CD4-positive, alpha-beta memory T cell (primary cell): ENCODE measurements at regions of chr1 and their contacts with region 1.

Region 1: GRCh38 chr1:181105134-181106021 is 16.9 kb downstream of the IER5 start:
- DNase-seq: peak; percentile 90 to 94 (median 91)
- H3K4me3 ChIP-seq: peak overlapping the region in 1 of 2 donors; percentile 76
- H3K4me3 Mint-ChIP-seq: peak overlapping the region; percentile 87 to 97 (median 90)
- H3K27ac ChIP-seq: peak overlapping the region; percentile 79
- H3K27ac Mint-ChIP-seq: peak overlapping the region; percentile 92 to 98 (median 96)
- H3K4me1 ChIP-seq: peaks cover 56% of the 10 kb centered on the region
- H3K4me1 Mint-ChIP-seq: peaks cover 33 to 71% (median 50%) of the 10 kb centered on the region in 4 donors
- H3K27me3 ChIP-seq: no peaks in the 10 kb centered on the region
- H3K27me3 Mint-ChIP-seq: no peaks in the 10 kb centered on the region

Region 2: GRCh38 chr1:181152892-181153633 is 47.7 kb after region 1 on chr1:
- CTCF ChIA-PET with region 1: no interaction called
- POLR2A ChIA-PET with region 1: interaction called, 19 read pairs
- intact Hi-C with region 1: no loop called
- DNase-seq: no peak
- H3K4me3 ChIP-seq: no peak overlapping the region
- H3K4me3 Mint-ChIP-seq: no peak overlapping the region
- H3K27ac ChIP-seq: no peak overlapping the region
- H3K27ac Mint-ChIP-seq: peak overlapping the region in 2 of 7 donors; percentile 23 to 62
- H3K4me1 ChIP-seq: peaks cover 56% of the 10 kb centered on the region
- H3K4me1 Mint-ChIP-seq: peaks cover 37 to 61% (median 49%) of the 10 kb centered on the region in 4 donors
- H3K27me3 ChIP-seq: no peaks in the 10 kb centered on the region
- H3K27me3 Mint-ChIP-seq: no peaks in the 10 kb centered on the region

Region 3: GRCh38 chr1:181159451-181160140 is 54.2 kb after region 1 on chr1:
- CTCF ChIA-PET with region 1: interaction called, 3 read pairs
- POLR2A ChIA-PET with region 1: interaction called, 16 read pairs
- intact Hi-C with region 1: no loop called
- DNase-seq: peak; percentile 72 to 84 (median 76)
- H3K4me3 ChIP-seq: peak overlapping the region in 1 of 2 donors; percentile 17
- H3K4me3 Mint-ChIP-seq: peak overlapping the region; percentile 65 to 83 (median 76)
- H3K27ac ChIP-seq: peak overlapping the region; percentile 16
- H3K27ac Mint-ChIP-seq: peak overlapping the region; percentile 91 to 98 (median 96)
- H3K4me1 ChIP-seq: peaks cover 40% of the 10 kb centered on the region
- H3K4me1 Mint-ChIP-seq: peaks cover 28 to 48% (median 39%) of the 10 kb centered on the region in 4 donors
- H3K27me3 ChIP-seq: no peaks in the 10 kb centered on the region
- H3K27me3 Mint-ChIP-seq: peaks cover 0 to 3% of the 10 kb centered on the region in 2 donors

Region 4: GRCh38 chr1:182029379-182030331 is 924.3 kb after region 1 on chr1:
- CTCF ChIA-PET with region 1: no interaction called
- POLR2A ChIA-PET with region 1: no interaction called
- intact Hi-C with region 1: loop called (anchors 5 kb)
- DNase-seq: peak; percentile 98
- H3K4me3 ChIP-seq: peak overlapping the region; percentile 92 to 94
- H3K4me3 Mint-ChIP-seq: peak overlapping the region; percentile 91 to 100 (median 96)
- H3K27ac ChIP-seq: peak overlapping the region; percentile 77
- H3K27ac Mint-ChIP-seq: peak overlapping the region; percentile 84 to 100 (median 99)
- H3K4me1 ChIP-seq: peaks cover 16% of the 10 kb centered on the region
- H3K4me1 Mint-ChIP-seq: peaks cover 14 to 21% (median 16%) of the 10 kb centered on the region in 4 donors
- H3K27me3 ChIP-seq: no peaks in the 10 kb centered on the region
- H3K27me3 Mint-ChIP-seq: no peaks in the 10 kb centered on the region